Right cardiac atrium (tissue), 5 donors: ENCODE measurements at regions of chr7 and their contacts with region 1.

Region 1: GRCh38 chr7:129845178-129845971 is 107.4 kb downstream of the UBE2H start:
- DNase-seq: no peak
- ATAC-seq: peak; percentile 30 to 35
- H3K4me3 ChIP-seq: no peak overlapping the region
- H3K27ac ChIP-seq: peak overlapping the region; percentile 61
- H3K4me1 ChIP-seq: peaks cover 13% of the 10 kb centered on the region
- H3K27me3 ChIP-seq: no peaks in the 10 kb centered on the region

Region 2: DNA sequence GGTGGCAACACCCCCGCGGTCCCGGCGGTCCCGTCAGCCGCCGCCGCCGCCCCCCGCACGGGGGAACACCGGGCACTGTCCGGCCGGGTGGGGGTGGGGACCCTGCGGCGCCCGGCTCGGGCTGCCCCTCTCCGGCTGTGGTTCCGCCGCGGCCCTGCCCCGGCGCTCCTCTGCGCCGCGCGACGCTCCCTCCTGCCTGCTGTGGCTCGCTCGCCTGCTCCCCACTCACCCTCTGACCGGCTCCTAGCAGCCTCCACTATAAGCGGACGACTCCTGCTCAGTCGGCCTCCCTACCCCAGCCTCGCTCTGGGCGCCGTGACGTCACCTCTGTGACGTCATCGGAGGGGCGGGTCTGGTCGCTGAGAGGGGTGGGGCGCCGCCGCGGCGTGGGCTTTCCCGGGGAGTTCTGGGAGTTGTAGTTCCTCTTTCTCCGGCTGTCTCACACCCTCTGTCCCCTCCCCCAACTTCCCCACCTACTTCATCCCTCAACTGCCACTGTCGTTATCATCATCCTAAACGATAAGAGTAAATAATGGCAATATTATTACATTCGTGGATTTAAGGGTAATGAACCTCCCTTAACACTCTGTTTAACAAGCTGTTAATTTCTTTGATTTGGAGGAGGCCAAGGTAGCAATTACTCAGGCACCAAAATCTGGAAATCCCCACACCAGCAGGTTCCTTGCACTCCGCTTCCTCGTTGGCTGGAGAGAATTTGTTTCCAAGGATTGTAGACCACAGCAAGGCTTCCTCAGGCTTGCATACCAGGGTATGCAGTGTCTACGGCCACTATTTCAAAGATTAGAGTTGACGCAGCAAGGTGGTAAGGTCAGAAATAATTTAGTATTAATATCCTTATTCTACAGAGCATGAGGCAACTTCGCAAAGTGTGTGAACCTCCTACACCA is 107.5 kb after region 1 on chr7 and contains the start of gene UBE2H:
- intact Hi-C with region 1: loop called in 1 of 4 experiments (anchors 10 kb)
- DNase-seq: peak; percentile 89 to 97 (median 97)
- ATAC-seq: peak; percentile 92 to 93
- H3K4me3 ChIP-seq: peak within 1 kb of the TSS; percentile 91
- H3K27ac ChIP-seq: peak within 1 kb of the TSS; percentile 92
- H3K4me1 ChIP-seq: peaks cover 5% of the 10 kb centered on the region
- H3K27me3 ChIP-seq: no peaks in the 10 kb centered on the region
- total RNA-seq, gene UBE2H: 59.9 to 79.0 (median 72.0) TPM